ENCODE measurements at regions of chr18 and their contacts with region 1.

Region 1: DNA sequence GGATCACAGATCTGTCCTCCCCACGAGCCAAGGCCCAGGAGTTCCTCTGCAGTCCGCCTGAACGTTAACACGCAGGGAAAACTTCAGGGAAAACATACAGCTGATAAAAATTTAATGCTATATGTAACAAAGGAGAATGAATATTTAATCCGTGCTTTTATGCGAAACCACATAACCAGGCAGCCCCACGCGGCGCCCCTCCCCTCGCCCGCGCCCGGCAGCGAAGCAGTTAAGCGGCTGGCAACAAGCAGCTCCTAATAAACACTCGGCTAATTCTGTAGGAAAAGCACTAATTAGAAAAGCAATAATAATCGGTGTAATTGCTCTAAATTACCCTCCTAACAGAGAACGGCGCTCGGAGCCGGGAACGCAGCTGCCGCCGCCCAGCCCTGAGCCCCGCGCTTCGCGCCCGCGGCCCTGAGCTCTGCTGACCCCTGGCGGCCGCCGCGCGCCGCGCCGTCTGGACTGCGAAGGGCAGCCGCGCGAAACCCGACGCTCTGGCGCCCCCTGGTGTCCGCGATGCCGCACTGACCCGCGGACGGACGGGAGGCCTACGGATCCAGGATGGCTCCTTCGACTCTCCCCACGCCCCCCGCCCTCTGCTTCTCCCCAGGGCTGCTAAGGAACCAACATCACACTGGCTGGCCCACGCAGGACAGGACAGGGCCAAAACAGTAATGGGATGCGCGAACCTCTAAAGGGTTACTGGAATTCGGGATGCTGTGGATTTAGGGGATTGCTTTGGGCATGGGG is 181.4 kb downstream of the SMAD2 start:
- DNase-seq: peak; percentile 87
- ATAC-seq: peak; percentile 99
- H3K4me3 Mint-ChIP-seq: peak overlapping the region; percentile 19
- H3K27ac Mint-ChIP-seq: no peak overlapping the region
- H3K4me1 Mint-ChIP-seq: peaks cover 5% of the 10 kb centered on the region
- H3K27me3 Mint-ChIP-seq: peaks cover 2% of the 10 kb centered on the region
- CTCF ChIP-seq: peak; percentile 99

Region 2: DNA sequence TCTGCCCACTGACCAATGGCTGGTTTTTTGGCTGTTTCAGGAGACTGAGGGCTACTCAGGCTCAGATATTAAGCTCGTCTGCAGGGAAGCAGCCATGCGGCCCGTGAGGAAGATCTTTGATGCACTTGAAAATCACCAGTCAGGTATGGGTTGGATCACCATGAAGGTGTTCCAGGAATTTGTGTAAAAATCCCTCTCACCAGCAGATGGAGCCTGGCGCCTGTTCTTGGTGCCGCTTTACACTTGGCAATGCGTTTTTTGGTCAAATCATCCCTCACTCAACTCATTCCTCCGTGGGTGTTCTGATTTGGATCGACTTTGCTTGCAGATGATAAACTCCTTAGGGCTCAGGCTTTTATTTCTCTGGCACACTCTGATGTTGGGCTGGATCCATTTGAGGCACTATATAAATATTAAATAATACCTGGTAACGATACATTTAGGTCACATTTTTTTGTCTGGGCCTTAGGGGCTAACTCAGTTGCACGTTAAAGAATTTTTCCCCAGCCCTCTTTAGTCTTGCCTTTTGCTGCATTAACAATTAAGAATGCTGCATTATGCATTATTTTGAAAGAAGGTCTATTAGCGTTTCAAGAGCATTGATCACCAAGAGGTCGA is 648.7 kb before region 1 on chr18:
- CTCF ChIA-PET with region 1: interaction called, 6 read pairs
- POLR2A ChIA-PET with region 1: no interaction called
- intact Hi-C with region 1: loop called (anchors 1 kb)
- DNase-seq: peak; percentile 24
- ATAC-seq: peak; percentile 42
- H3K4me3 Mint-ChIP-seq: no peak overlapping the region
- H3K27ac Mint-ChIP-seq: no peak overlapping the region
- H3K4me1 Mint-ChIP-seq: no peaks in the 10 kb centered on the region
- H3K27me3 Mint-ChIP-seq: no peaks in the 10 kb centered on the region
- CTCF ChIP-seq: peak; percentile 85

Region 3: GRCh38 chr18:47215554-47216138 is 533.4 kb before region 1 on chr18:
- CTCF ChIA-PET with region 1: interaction called, 27 read pairs
- POLR2A ChIA-PET with region 1: no interaction called
- intact Hi-C with region 1: loop called (anchors 1 kb)
- DNase-seq: no peak
- ATAC-seq: peak; percentile 31
- H3K4me3 Mint-ChIP-seq: no peak overlapping the region
- H3K27ac Mint-ChIP-seq: no peak overlapping the region
- H3K4me1 Mint-ChIP-seq: no peaks in the 10 kb centered on the region
- H3K27me3 Mint-ChIP-seq: peaks cover 36% of the 10 kb centered on the region
- CTCF ChIP-seq: no peak

Region 4: DNA sequence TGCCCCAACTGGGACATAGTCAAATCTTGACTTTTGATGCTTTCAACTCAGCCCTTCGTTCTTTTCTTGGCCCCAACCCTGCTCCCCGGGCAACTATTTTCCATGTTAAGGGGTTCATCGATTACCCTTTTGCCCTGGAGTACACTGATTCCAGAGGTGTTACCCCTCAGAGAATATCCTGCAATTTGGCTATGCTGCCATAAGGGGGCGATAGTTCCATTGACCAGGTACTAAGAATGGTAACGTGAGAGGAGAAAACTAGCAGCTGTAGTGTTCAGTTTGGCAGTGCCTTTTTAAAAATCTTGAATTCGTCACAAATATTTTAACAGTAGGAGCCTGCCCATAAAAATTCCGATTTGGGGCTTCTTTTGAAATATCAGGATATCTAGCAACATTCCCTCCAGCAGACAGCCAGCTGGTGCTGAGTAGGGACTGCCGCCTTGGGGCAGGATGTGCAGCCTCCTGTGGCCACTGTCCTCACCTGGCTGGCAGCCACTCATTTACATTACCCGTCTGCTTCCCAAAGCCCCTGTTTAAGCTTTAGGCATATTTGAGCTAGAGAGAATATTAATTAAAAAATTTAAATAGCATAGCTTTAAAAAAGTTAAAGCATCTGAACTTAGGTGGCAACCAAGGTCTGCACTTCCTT is 351.2 kb before region 1 on chr18:
- CTCF ChIA-PET with region 1: interaction called, 7 read pairs
- POLR2A ChIA-PET with region 1: no interaction called
- intact Hi-C with region 1: loop called (anchors 2 kb)
- DNase-seq: no peak
- ATAC-seq: no peak
- H3K4me3 Mint-ChIP-seq: no peak overlapping the region
- H3K27ac Mint-ChIP-seq: no peak overlapping the region
- H3K4me1 Mint-ChIP-seq: no peaks in the 10 kb centered on the region
- H3K27me3 Mint-ChIP-seq: peaks cover 8% of the 10 kb centered on the region
- CTCF ChIP-seq: no peak

Region 5: DNA sequence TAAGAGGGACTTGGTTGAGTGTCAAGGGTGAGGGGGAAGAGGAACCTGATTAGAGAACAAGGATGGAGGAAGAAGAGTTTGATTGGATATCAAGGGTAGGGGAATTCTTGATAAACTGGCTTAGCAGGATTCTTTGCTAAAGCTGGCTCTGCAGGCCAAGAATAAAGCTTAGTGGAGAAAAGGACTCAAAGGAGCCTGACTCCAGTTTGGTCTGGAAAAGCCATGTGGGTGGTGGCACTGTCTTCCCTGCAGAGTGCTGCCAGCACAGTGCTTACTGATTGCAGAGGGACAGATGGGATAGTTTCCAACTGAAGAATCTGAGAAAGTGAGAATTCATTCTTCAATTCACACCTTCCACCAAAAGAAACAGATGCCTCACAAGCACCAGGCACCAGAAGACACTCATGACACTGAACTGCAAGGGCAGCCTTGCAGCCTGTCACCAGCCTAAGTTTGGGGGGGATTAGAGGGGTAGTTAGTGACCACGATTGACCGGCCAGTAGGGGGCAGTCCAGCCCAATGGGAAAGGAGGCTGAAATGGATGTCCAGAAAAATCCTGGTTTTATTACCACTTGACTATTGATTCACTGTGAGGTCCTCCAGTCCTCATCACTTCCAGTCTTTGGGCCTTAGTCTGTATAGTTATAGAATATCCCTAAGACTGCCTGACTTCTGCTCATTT is 153.1 kb before region 1 on chr18:
- CTCF ChIA-PET with region 1: interaction called, 30 read pairs
- POLR2A ChIA-PET with region 1: no interaction called
- intact Hi-C with region 1: loop called (anchors 1 kb)
- DNase-seq: peak; percentile 28
- ATAC-seq: no peak
- H3K4me3 Mint-ChIP-seq: no peak overlapping the region
- H3K27ac Mint-ChIP-seq: no peak overlapping the region
- H3K4me1 Mint-ChIP-seq: no peaks in the 10 kb centered on the region
- H3K27me3 Mint-ChIP-seq: peaks cover 30% of the 10 kb centered on the region
- CTCF ChIP-seq: no peak

Region 6: DNA sequence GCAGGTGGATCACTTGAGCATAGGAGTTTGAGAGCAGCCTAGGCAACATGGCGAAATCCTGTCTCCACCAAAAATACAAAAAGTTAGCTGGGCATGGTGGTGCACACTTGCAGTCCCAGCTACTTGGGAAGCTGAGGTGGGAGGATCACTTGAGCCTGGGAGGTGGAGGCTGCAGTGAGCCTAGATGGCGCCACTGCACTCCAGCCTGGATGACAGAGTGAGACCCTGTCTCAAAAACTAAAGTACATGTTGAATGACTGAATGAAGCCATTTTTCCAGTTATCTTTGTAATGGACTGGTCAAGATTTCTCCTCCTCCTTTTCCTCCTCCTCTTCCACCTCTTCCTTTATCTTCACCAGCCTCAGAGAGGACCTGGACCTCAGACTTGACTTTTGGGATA is 90.5 kb before region 1 on chr18:
- CTCF ChIA-PET with region 1: no interaction called
- POLR2A ChIA-PET with region 1: no interaction called
- intact Hi-C with region 1: no loop called
- DNase-seq: no peak
- ATAC-seq: no peak
- H3K4me3 Mint-ChIP-seq: no peak overlapping the region
- H3K27ac Mint-ChIP-seq: no peak overlapping the region
- H3K4me1 Mint-ChIP-seq: no peaks in the 10 kb centered on the region
- H3K27me3 Mint-ChIP-seq: no peaks in the 10 kb centered on the region
- CTCF ChIP-seq: no peak